ENCODE measurements at regions of chr18 and their contacts with region 1.

Region 1: GRCh38 chr18:32018331-32019250 is at the start of gene RNF125:
- DNase-seq: peak; percentile 91
- ATAC-seq: peak; percentile 74
- H3K4me3 Mint-ChIP-seq: peak within 1 kb of the TSS; percentile 86
- H3K27ac Mint-ChIP-seq: peak within 1 kb of the TSS; percentile 94
- H3K4me1 Mint-ChIP-seq: peaks cover 42% of the 10 kb centered on the region
- H3K27me3 Mint-ChIP-seq: no peaks in the 10 kb centered on the region
- CTCF ChIP-seq: no peak
- total RNA-seq, gene RNF125: 15.3 to 19.1 TPM

Region 2: GRCh38 chr18:31942999-31943865 is 75.4 kb before region 1 on chr18 and contains the start of gene TRAPPC8:
- CTCF ChIA-PET with region 1: interaction called, 15 read pairs
- POLR2A ChIA-PET with region 1: interaction called, 35 read pairs
- intact Hi-C with region 1: loop called (anchors 2 kb)
- DNase-seq: peak; percentile 96
- ATAC-seq: peak; percentile 83
- H3K4me3 Mint-ChIP-seq: peak within 1 kb of the TSS; percentile 100
- H3K27ac Mint-ChIP-seq: peak within 1 kb of the TSS; percentile 99
- H3K4me1 Mint-ChIP-seq: peaks cover 33% of the 10 kb centered on the region
- H3K27me3 Mint-ChIP-seq: no peaks in the 10 kb centered on the region
- CTCF ChIP-seq: no peak
- total RNA-seq, gene TRAPPC8: 26.1 to 29.6 TPM

Region 3: GRCh38 chr18:32040936-32041335 is 22.3 kb after region 1 on chr18:
- CTCF ChIA-PET with region 1: interaction called, 7 read pairs
- POLR2A ChIA-PET with region 1: interaction called, 25 read pairs
- intact Hi-C with region 1: loop called (anchors 2 kb)
- DNase-seq: peak; percentile 75
- ATAC-seq: peak; percentile 92
- H3K4me3 Mint-ChIP-seq: peak overlapping the region; percentile 61
- H3K27ac Mint-ChIP-seq: peak overlapping the region; percentile 88
- H3K4me1 Mint-ChIP-seq: peaks cover 51% of the 10 kb centered on the region
- H3K27me3 Mint-ChIP-seq: no peaks in the 10 kb centered on the region
- CTCF ChIP-seq: no peak

Region 4: DNA sequence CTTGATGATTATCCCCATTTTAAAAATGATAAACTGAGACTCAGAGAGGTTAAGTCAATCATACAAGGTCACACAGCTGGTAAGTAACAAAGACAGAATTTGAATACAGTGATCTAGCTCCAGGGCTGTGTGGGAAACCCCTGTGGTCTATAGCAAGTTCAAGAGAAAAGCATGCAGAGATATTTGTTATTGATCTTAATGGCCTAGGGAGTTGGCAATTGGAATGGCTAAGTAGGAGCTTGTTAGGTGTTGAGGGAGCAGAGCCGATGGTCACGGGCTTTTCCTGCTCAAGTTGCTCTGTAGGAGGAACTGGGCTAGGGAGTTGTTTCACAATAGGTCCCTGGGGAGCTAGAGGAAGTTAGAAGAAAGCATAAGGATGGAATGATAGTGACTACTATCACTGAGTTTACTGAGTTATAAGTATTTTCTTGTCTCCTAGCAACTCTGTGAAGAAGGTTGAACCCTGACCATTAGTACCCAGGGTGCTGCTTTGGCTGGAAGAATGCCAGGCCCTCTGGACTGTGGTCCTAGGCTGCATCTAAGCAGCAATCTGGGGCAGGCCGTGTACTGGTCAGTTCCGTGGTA is 30.0 kb after region 1 on chr18:
- CTCF ChIA-PET with region 1: interaction called, 7 read pairs
- POLR2A ChIA-PET with region 1: interaction called, 31 read pairs
- intact Hi-C with region 1: loop called (anchors 2 kb)
- DNase-seq: peak; percentile 57
- ATAC-seq: peak; percentile 64
- H3K4me3 Mint-ChIP-seq: no peak overlapping the region
- H3K27ac Mint-ChIP-seq: peak overlapping the region; percentile 90
- H3K4me1 Mint-ChIP-seq: peaks cover 30% of the 10 kb centered on the region
- H3K27me3 Mint-ChIP-seq: no peaks in the 10 kb centered on the region
- CTCF ChIP-seq: no peak

Region 5: DNA sequence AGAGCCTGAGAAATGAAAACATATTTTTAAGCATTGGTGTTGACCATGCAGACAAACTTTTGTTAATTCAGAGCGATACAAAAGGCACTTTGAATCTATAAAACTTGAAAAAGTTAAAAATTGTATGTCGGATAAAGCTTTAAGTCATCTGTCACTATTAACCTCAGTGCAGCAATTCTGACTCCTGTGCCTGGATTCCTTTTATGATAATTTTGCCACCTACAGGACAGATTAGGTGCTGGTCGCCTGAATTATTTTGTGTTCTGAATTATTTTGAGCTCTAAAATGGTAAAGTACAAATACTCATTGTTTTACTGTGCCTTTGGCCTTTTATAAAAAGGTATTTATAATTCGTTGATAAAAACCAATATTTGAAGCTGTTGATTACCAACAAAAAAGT is 53.7 kb after region 1 on chr18:
- CTCF ChIA-PET with region 1: interaction called, 31 read pairs
- POLR2A ChIA-PET with region 1: interaction called, 10 read pairs
- intact Hi-C with region 1: no loop called
- DNase-seq: peak; percentile 22
- ATAC-seq: peak; percentile 73
- H3K4me3 Mint-ChIP-seq: no peak overlapping the region
- H3K27ac Mint-ChIP-seq: no peak overlapping the region
- H3K4me1 Mint-ChIP-seq: peaks cover 21% of the 10 kb centered on the region
- H3K27me3 Mint-ChIP-seq: no peaks in the 10 kb centered on the region
- CTCF ChIP-seq: peak; percentile 66

Region 6: GRCh38 chr18:32086861-32087260 is 68.3 kb after region 1 on chr18:
- CTCF ChIA-PET with region 1: interaction called, 15 read pairs
- POLR2A ChIA-PET with region 1: interaction called, 54 read pairs
- intact Hi-C with region 1: loop called (anchors 2 kb)
- DNase-seq: no peak
- ATAC-seq: no peak
- H3K4me3 Mint-ChIP-seq: no peak overlapping the region
- H3K27ac Mint-ChIP-seq: no peak overlapping the region
- H3K4me1 Mint-ChIP-seq: peaks cover 31% of the 10 kb centered on the region
- H3K27me3 Mint-ChIP-seq: peaks cover 1% of the 10 kb centered on the region
- CTCF ChIP-seq: no peak

Region 7: DNA sequence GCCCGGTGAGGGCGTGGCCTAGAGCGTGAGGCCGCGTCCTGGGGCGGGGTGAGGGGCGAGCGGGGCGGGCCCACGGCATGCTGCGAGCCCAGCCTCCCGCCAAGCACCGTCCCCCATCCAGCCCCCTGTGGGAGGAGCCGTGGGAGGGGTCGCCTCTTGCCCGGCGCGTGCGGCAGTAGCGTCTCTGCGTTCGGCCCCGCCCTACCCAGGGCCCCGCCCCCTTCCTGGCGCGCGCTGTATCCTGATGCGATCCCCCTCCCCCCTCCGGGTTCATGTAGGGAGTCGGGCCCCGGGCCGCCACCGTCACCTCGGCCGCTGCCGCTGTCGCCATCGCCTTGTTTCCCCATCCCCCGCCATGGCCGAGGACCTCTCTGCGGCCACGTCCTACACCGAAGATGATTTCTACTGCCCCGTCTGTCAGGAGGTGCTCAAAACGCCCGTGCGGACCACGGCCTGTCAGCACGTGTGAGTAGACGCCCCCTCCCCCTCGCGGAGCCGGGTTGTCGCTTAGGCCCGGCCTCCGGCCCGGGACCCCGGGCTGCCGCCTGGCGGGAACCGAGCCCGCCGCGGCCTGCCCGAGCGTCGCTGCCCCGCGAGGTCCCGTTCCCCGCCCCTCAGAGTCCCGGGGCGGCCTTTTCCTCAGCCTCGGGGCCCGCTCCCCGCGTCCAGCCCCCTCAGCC is 74.0 kb after region 1 on chr18:
- CTCF ChIA-PET with region 1: interaction called, 4 read pairs
- POLR2A ChIA-PET with region 1: interaction called, 54 read pairs
- intact Hi-C with region 1: loop called (anchors 2 kb)
- DNase-seq: peak; percentile 100
- ATAC-seq: peak; percentile 92
- H3K4me3 Mint-ChIP-seq: peak overlapping the region; percentile 97
- H3K27ac Mint-ChIP-seq: peak overlapping the region; percentile 97
- H3K4me1 Mint-ChIP-seq: peaks cover 41% of the 10 kb centered on the region
- H3K27me3 Mint-ChIP-seq: no peaks in the 10 kb centered on the region
- CTCF ChIP-seq: no peak

Measured in activated CD8-positive, alpha-beta T cell treated with anti-CD3 and anti-CD28 coated beads for 36 hours (primary cell).